Breast epithelium (tissue), 4 donors: ENCODE measurements at regions of chr12 and their contacts with region 1.

Region 1: GRCh38 chr12:124700810-124701592 is 133.6 kb upstream of the NCOR2 start:
- DNase-seq: peak in 1 of 2 donors; percentile 76
- H3K4me3 ChIP-seq: no peak overlapping the region
- H3K27ac ChIP-seq: peak overlapping the region; percentile 82 to 84
- H3K4me1 ChIP-seq: peaks cover 0 to 11% of the 10 kb centered on the region in 2 donors
- H3K27me3 ChIP-seq: no peaks in the 10 kb centered on the region
- CTCF ChIP-seq: peak in 1 of 3 donors; percentile 10
- POLR2A ChIP-seq: no peak

Region 2: DNA sequence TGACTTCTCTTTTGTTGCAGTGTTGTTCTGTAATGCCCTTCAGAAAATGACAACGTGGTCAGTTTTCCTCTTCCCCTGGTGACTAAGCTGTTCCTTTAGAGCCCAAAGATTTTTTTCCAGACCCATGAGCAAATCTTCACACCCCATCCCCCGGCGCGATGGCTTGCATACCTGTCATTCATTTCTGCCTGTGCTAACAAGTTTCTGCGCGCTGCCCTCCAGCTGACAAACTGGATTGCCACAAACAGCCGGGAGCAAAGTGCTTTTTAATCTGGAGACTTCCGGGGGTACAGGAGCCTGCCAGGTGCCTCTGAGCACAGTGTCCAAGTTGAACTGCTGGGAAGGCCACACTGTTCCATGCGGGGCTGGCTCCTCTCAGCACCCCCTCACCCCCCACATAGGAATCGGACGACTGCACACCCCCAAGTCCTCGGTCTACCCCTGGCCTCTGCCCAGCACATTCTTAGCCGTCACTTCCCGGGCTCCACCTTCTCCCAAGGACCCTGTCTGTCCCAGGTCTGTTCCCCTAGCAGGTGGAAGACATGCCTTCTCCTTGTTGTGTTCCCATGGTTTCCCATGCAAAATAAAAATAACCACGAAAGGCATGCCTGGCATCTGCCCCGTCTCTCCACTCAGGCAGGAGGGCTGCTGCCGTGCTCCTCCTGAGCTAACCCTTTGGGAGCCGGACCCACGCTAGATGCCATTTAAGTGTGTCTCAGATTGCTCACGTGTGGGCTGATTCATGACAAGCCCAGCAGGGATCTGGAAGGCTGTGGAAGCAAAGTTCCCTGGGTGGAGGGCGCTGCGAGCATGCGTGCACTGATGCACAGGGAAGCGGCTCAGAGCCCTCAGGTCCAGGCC is 1181.6 kb before region 1 on chr12:
- intact Hi-C with region 1: loop called (anchors 5 kb)
- DNase-seq: peak; percentile 81 to 94
- H3K4me3 ChIP-seq: peak overlapping the region in 1 of 3 donors; percentile 31
- H3K27ac ChIP-seq: peak overlapping the region; percentile 85 to 88
- H3K4me1 ChIP-seq: no peaks in the 10 kb centered on the region
- H3K27me3 ChIP-seq: no peaks in the 10 kb centered on the region
- CTCF ChIP-seq: no peak
- POLR2A ChIP-seq: no peak

Region 3: GRCh38 chr12:124718036-124718435 is 17.0 kb after region 1 on chr12:
- intact Hi-C with region 1: loop called (anchors 1 kb)
- DNase-seq: no peak
- H3K4me3 ChIP-seq: no peak overlapping the region
- H3K27ac ChIP-seq: no peak overlapping the region
- H3K4me1 ChIP-seq: peaks cover 6 to 8% of the 10 kb centered on the region in 2 donors
- H3K27me3 ChIP-seq: no peaks in the 10 kb centered on the region
- CTCF ChIP-seq: no peak
- POLR2A ChIP-seq: no peak